ENCODE measurements at regions of chr12 and their contacts with region 1.

Region 1: DNA sequence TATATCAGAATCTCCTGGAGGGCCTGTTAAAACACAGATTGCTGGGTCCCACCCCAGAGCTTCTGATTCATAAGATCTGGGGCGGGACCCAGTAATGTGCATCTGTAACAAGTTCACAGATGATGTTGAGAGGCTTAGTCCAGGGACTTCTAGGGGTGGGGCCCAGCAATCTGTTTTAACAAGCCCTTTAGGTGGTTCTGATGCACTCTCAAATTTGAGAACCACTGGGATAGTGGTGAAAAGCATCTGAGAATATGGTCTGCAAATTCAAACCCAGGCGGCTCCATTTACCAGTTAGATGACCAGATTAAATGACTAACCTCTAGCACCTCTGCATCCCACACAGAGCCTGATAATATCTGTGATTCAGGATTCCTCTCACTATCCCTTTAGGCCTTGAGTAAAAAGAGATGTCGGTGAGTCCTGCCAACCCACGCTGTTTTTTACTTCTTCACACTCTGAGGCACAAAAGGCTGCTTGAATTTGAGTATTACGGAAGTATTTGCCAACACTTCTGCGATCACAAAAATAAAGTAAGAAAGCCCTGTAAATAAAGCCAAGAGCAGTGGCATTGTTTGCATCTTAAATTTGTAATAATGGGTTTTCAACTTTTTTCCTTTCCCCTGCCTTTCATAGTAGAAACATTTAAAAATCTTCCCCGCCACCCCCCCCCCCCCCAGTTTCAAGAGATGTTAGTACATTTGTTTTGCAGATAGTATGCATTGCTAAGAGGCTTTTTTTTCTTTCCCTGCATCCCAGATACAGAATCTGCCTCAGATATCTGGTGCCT is 1.8 kb upstream of the FRS2 start:
- DNase-seq: no peak
- H3K4me3 ChIP-seq: no peak overlapping the region
- H3K27ac ChIP-seq: no peak overlapping the region
- H3K4me1 ChIP-seq: peaks cover 9 to 30% (median 19%) of the 10 kb centered on the region in 4 donors
- H3K27me3 ChIP-seq: no peaks in the 10 kb centered on the region
- CTCF ChIP-seq: no peak
- EP300 ChIP-seq: no peak
- POLR2A ChIP-seq: no peak

Region 2: GRCh38 chr12:69438539-69438938 is 29.9 kb before region 1 on chr12:
- in situ Hi-C with region 1: no loop called
- intact Hi-C with region 1: loop called (anchors 2 kb)
- DNase-seq: no peak
- H3K4me3 ChIP-seq: no peak overlapping the region
- H3K27ac ChIP-seq: no peak overlapping the region
- H3K4me1 ChIP-seq: no peaks in the 10 kb centered on the region
- H3K27me3 ChIP-seq: no peaks in the 10 kb centered on the region
- CTCF ChIP-seq: no peak
- EP300 ChIP-seq: no peak
- POLR2A ChIP-seq: no peak